Naive thymus-derived CD4-positive, alpha-beta T cell (primary cell): ENCODE measurements at regions of chr1 and their contacts with region 1.

Region 1: GRCh38 chr1:241531195-241532161 is 700 bp upstream of the KMO start:
- DNase-seq: peak in 7 of 9 donors; percentile 34 to 77 (median 67)
- ATAC-seq: peak; percentile 92
- H3K4me3 ChIP-seq: peak overlapping the region; percentile 71
- H3K4me3 Mint-ChIP-seq: peak overlapping the region; percentile 86 to 99 (median 92)
- H3K27ac ChIP-seq: peak overlapping the region; percentile 54
- H3K27ac Mint-ChIP-seq: peak overlapping the region; percentile 49 to 93 (median 83)
- H3K4me1 ChIP-seq: peaks cover 4 to 6% of the 10 kb centered on the region in 2 donors
- H3K4me1 Mint-ChIP-seq: peaks cover 8 to 16% (median 13%) of the 10 kb centered on the region in 7 donors
- H3K27me3 ChIP-seq: no peaks in the 10 kb centered on the region
- H3K27me3 Mint-ChIP-seq: peaks cover 0 to 37% (median 0%) of the 10 kb centered on the region in 5 donors

Region 2: GRCh38 chr1:241551759-241552638 is 20.5 kb after region 1 on chr1:
- CTCF ChIA-PET with region 1: interaction called, 5 read pairs
- POLR2A ChIA-PET with region 1: interaction called, 5 read pairs
- intact Hi-C with region 1: loop called (anchors 1 kb)
- DNase-seq: peak; percentile 25 to 72 (median 61)
- ATAC-seq: peak; percentile 91
- H3K4me3 ChIP-seq: peak overlapping the region; percentile 49
- H3K4me3 Mint-ChIP-seq: peak overlapping the region; percentile 83 to 93 (median 88)
- H3K27ac ChIP-seq: peak overlapping the region; percentile 55
- H3K27ac Mint-ChIP-seq: peak overlapping the region; percentile 93 to 98 (median 96)
- H3K4me1 ChIP-seq: peaks cover 0 to 14% of the 10 kb centered on the region in 2 donors
- H3K4me1 Mint-ChIP-seq: peaks cover 14 to 36% (median 25%) of the 10 kb centered on the region in 7 donors
- H3K27me3 ChIP-seq: no peaks in the 10 kb centered on the region
- H3K27me3 Mint-ChIP-seq: peaks cover 0 to 5% (median 0%) of the 10 kb centered on the region in 5 donors

Region 3: DNA sequence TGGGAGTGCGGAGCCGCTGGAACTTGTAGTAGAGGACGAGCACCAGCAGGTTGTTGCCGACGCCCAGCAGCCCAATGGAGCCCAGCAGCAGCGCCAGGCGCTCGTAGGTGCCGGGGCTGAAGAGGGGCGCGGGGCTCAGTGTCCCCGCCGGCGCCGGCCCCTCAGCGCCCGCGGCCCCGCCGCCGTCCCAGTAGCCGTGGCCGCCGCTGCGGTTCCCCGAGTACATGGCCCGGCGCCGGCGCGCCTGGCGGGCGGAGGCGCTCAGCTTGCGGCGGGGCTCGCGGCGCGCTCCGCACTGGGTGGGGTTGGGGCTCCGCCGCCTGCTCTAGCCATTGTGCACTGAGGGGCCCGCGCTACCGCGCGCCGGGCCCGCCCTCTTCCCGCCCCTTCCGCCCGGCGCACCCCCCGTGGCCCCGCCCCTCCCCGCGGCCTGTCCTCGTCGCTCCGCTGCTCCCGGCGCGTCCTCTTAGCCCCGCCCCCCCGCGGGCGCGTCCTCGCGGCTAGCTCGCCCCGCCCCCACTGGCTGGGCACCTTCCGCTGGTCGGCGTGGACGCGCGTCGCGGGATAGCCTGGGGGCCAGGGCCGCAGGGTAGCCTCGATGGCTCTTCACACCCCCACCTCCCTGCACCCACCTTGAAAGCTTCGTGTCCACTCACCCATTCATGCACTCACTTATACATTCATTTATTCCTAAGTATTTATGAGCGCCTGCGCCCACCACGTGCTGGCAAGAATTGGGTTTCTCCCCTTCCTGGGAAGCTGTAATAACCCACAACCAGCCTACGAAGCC is 108.7 kb after region 1 on chr1 and contains the starts of genes CHML and OPN3:
- CTCF ChIA-PET with region 1: no interaction called
- POLR2A ChIA-PET with region 1: no interaction called
- intact Hi-C with region 1: loop called in 1 of 2 experiments (anchors 1 kb)
- DNase-seq: peak; percentile 79 to 98 (median 85)
- ATAC-seq: peak; percentile 97
- H3K4me3 ChIP-seq: peak within 1 kb of the TSS; percentile 84
- H3K4me3 Mint-ChIP-seq: peak within 1 kb of the TSS; percentile 79 to 92 (median 90)
- H3K27ac ChIP-seq: peak within 1 kb of the TSS; percentile 82
- H3K27ac Mint-ChIP-seq: peak within 1 kb of the TSS; percentile 83 to 97 (median 91)
- H3K4me1 ChIP-seq: peaks cover 0 to 20% of the 10 kb centered on the region in 2 donors
- H3K4me1 Mint-ChIP-seq: peaks cover 25 to 47% (median 45%) of the 10 kb centered on the region in 7 donors
- H3K27me3 ChIP-seq: no peaks in the 10 kb centered on the region
- H3K27me3 Mint-ChIP-seq: no peaks in the 10 kb centered on the region
- total RNA-seq, gene CHML: 11.4 to 18.3 (median 14.0) TPM
- total RNA-seq, gene OPN3: 3.6 to 11.5 (median 10.4) TPM

Region 4: GRCh38 chr1:241834733-241835377 is 303.4 kb after region 1 on chr1:
- CTCF ChIA-PET with region 1: no interaction called
- POLR2A ChIA-PET with region 1: no interaction called
- intact Hi-C with region 1: loop called in 1 of 2 experiments (anchors 1 kb)
- DNase-seq: no peak
- ATAC-seq: no peak
- H3K4me3 ChIP-seq: no peak overlapping the region
- H3K4me3 Mint-ChIP-seq: no peak overlapping the region
- H3K27ac ChIP-seq: no peak overlapping the region
- H3K27ac Mint-ChIP-seq: no peak overlapping the region
- H3K4me1 ChIP-seq: no peaks in the 10 kb centered on the region
- H3K4me1 Mint-ChIP-seq: peaks cover 0 to 2% (median 0%) of the 10 kb centered on the region in 7 donors
- H3K27me3 ChIP-seq: no peaks in the 10 kb centered on the region
- H3K27me3 Mint-ChIP-seq: peaks cover 0 to 29% (median 11%) of the 10 kb centered on the region in 5 donors

Region 5: DNA sequence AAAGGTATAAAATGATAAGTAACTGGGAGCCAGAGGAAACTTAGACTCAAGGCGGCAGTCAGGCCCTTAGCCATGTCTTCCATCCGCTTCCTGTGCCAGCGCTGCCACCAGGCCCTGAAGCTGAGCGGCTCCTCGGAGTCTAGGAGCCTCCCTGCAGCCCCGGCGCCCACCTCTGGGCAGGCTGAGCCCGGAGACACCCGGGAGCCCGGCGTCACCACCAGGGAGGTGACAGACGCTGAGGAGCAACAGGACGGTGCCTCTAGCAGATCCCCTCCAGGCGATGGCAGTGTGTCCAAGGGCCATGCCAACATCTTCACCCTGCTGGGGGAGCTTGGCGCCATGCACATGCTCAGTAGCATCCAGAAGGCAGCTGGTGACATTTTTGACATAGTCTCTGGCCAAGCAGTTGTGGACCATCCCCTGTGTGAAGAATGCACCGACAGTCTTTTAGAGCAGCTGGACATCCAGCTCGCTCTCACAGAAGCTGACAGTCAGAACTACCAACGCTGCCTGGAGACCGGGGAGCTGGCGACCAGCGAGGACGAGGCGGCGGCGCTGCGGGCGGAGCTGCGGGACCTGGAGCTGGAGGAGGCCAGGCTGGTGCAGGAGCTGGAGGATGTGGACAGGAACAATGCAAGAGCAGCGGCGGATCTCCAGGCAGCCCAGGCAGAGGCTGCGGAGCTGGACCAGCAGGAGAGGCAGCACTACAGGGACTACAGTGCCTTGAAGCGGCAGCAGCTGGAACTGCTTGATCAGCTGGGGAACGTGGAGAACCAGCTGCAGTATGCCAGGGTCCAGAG is 426.4 kb after region 1 on chr1 and contains the start of gene BECN2:
- CTCF ChIA-PET with region 1: no interaction called
- POLR2A ChIA-PET with region 1: no interaction called
- intact Hi-C with region 1: no loop called
- DNase-seq: no peak
- ATAC-seq: peak; percentile 14
- H3K4me3 ChIP-seq: no peak within 1 kb of the TSS
- H3K4me3 Mint-ChIP-seq: no peak within 1 kb of the TSS
- H3K27ac ChIP-seq: no peak within 1 kb of the TSS
- H3K27ac Mint-ChIP-seq: no peak within 1 kb of the TSS
- H3K4me1 ChIP-seq: no peaks in the 10 kb centered on the region
- H3K4me1 Mint-ChIP-seq: peaks cover 0 to 3% (median 0%) of the 10 kb centered on the region in 7 donors
- H3K27me3 ChIP-seq: no peaks in the 10 kb centered on the region
- H3K27me3 Mint-ChIP-seq: no peaks in the 10 kb centered on the region
- total RNA-seq, gene BECN2: not detected

Region 6: GRCh38 chr1:241998412-241998921 is 467.0 kb after region 1 on chr1:
- CTCF ChIA-PET with region 1: no interaction called
- POLR2A ChIA-PET with region 1: interaction called, 5 read pairs
- intact Hi-C with region 1: loop called (anchors 1 kb)
- DNase-seq: peak; percentile 10 to 53 (median 30)
- ATAC-seq: peak; percentile 69
- H3K4me3 ChIP-seq: peak overlapping the region; percentile 39
- H3K4me3 Mint-ChIP-seq: peak overlapping the region; percentile 16 to 68 (median 61)
- H3K27ac ChIP-seq: no peak overlapping the region
- H3K27ac Mint-ChIP-seq: no peak overlapping the region
- H3K4me1 ChIP-seq: no peaks in the 10 kb centered on the region
- H3K4me1 Mint-ChIP-seq: peaks cover 0 to 7% (median 5%) of the 10 kb centered on the region in 7 donors
- H3K27me3 ChIP-seq: peaks cover 0 to 3% of the 10 kb centered on the region in 2 donors
- H3K27me3 Mint-ChIP-seq: peaks cover 0 to 6% (median 4%) of the 10 kb centered on the region in 5 donors